GM13976 (cell line): ENCODE measurements at regions of chr5 and their contacts with region 1.

Region 1: GRCh38 chr5:128213340-128213739 is 129.8 kb downstream of the SLC12A2 start:
- DNase-seq: no peak
- CTCF ChIP-seq: peak; percentile 65

Region 2: DNA sequence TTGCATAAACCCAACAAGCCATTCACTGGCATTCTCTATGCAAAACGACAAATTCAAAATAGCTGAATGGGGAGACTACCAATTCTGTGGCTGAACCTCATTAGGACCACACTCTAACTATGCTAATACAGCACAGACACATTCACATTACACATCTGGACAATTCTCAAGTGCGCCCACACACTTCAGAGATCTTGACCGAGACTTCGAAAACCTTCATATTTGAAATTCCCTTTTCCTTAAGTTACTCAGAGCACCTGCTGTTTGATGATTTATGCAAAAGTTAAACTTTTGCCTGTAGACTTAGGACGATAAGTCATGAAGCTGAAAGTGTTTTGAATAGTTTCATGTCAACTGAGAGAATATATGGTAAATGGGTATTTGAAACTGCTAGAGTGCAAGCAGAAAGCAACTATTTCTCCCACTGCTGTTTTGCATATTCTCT is 212.8 kb after region 1 on chr5:
- in situ Hi-C with region 1: no loop called
- DNase-seq: no peak
- CTCF ChIP-seq: no peak

Region 3: DNA sequence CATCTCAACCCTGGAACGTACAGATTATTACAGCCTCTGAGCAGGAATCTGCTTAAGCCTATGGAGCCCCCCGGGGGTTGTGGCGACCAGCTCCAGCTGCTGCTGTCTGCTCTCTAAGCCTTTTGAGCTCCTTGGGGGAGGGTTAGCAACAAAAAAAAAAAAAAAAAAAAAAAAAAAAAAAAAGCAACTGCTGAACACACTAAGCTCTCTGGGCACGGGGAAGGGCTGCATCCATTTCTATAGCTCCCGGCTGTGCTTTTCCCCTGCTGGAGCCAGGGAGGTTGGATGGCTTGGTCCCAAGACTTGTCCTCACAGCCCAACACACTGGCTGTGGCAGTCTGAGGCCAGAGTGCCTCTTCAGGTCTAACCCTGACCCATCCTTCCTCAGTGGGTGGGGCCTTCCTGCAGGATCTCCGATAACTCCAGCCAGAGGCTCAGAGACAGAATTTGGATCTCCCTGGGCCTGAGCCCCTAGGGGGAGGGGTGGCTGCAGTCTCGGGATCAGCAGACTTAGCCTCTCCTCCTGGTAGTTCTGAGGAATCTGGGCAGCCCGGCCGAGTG is 242.6 kb after region 1 on chr5:
- in situ Hi-C with region 1: no loop called
- DNase-seq: no peak
- CTCF ChIP-seq: no peak

Region 4: GRCh38 chr5:128498844-128499455 is 285.6 kb after region 1 on chr5:
- in situ Hi-C with region 1: loop called (anchors 10 kb)
- DNase-seq: peak; percentile 18
- CTCF ChIP-seq: peak; percentile 21